Panc1 (cell line): ENCODE measurements at regions of chr17 and their contacts with region 1.

Region 1: GRCh38 chr17:63425482-63425881 is 20.6 kb downstream of the CYB561 start:
- DNase-seq: no peak
- ATAC-seq: peak; percentile 91
- H3K4me3 ChIP-seq: no peak overlapping the region
- H3K27ac ChIP-seq: no peak overlapping the region
- H3K4me1 ChIP-seq: peaks cover 28% of the 10 kb centered on the region
- H3K27me3 ChIP-seq: no peaks in the 10 kb centered on the region
- CTCF ChIP-seq: peak; percentile 96

Region 2: GRCh38 chr17:63399856-63400255 is 25.6 kb before region 1 on chr17:
- CTCF ChIA-PET with region 1: no interaction called
- POLR2A ChIA-PET with region 1: no interaction called
- in situ Hi-C with region 1: no loop called
- intact Hi-C with region 1: no loop called
- DNase-seq: no peak
- ATAC-seq: no peak
- H3K4me3 ChIP-seq: no peak overlapping the region
- H3K27ac ChIP-seq: no peak overlapping the region
- H3K4me1 ChIP-seq: no peaks in the 10 kb centered on the region
- H3K27me3 ChIP-seq: no peaks in the 10 kb centered on the region
- CTCF ChIP-seq: no peak

Region 3: DNA sequence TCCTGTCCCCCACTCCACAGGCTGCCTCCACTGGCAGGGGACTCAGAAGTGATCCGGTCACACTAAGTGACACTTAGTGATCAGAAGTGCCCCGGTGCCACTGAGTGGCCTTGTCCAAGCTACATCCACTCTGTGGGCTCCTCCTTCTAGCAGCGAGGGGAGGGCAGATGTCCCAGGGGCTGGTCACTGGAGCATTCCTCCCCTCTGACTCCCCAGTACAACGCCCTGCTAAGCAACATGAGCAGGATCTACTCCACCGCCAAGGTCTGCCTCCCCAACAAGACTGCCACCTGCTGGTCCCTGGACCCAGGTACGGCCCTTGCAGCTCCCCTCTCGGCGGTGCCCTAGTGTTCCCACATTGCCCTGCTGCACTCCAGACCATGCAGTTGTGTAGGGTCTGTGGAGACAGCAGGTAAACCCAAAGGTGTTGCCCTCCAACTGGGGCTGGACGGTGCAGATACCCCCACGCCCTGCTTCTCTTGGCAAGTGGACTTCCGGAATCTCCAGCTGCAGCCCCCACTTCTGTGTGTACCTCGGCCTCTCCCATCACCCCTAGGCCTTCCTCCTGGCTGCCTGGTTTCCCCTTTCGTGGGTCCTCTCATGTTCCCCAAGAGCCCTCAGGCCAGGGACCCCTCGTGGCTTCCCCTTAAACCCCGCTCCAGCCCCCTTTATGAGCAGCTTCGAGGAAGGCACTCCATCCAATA is 53.5 kb after region 1 on chr17:
- CTCF ChIA-PET with region 1: interaction called, 24 read pairs
- POLR2A ChIA-PET with region 1: no interaction called
- in situ Hi-C with region 1: no loop called
- intact Hi-C with region 1: loop called (anchors 5 kb)
- DNase-seq: peak; percentile 54
- ATAC-seq: peak; percentile 87
- H3K4me3 ChIP-seq: no peak overlapping the region
- H3K27ac ChIP-seq: no peak overlapping the region
- H3K4me1 ChIP-seq: peaks cover 16% of the 10 kb centered on the region
- H3K27me3 ChIP-seq: no peaks in the 10 kb centered on the region
- CTCF ChIP-seq: peak; percentile 95

Region 4: DNA sequence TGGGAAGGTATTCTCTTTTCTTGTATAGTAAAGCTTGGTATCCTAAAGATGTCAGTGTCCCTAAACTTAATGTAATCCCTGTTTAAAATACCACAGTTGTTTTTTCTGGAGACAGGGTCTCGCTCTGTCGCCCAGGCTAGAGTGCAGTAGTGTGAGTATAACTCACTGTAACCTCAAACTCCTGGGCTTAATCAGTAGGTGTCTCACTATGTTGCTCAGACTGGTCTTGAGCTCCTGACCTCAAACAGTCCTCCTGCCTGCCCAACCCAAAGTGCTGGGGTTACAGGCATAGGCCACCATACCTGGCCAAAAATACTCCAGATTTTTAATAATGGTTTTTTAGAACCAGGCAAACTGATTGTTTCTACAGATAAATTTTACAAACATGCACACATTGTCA is 133.0 kb after region 1 on chr17:
- CTCF ChIA-PET with region 1: no interaction called
- POLR2A ChIA-PET with region 1: no interaction called
- in situ Hi-C with region 1: no loop called
- intact Hi-C with region 1: no loop called
- DNase-seq: no peak
- ATAC-seq: no peak
- H3K4me3 ChIP-seq: no peak overlapping the region
- H3K27ac ChIP-seq: no peak overlapping the region
- H3K4me1 ChIP-seq: no peaks in the 10 kb centered on the region
- H3K27me3 ChIP-seq: no peaks in the 10 kb centered on the region
- CTCF ChIP-seq: no peak

Region 5: DNA sequence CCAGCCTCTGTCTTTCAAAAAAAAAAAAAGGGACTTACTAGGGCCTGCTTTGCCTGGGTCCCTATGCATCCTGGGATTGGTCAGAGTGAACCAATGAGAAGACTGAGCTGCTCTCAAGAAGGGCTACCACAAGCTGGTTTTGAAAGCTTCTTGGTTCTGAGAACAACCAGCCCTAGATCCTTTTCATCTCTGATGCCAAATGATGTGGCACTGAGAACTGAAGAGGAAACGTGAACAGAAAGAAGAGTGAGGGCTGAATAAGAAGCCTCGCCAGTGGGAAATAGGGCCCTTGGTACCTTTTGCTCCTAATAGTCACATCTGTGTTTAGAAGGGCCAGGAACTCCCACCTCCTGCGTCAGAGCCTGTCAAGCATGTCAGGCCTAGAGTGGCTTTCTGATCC is 185.9 kb after region 1 on chr17:
- CTCF ChIA-PET with region 1: interaction called, 16 read pairs
- POLR2A ChIA-PET with region 1: no interaction called
- in situ Hi-C with region 1: no loop called
- intact Hi-C with region 1: loop called (anchors 1 kb)
- DNase-seq: no peak
- ATAC-seq: no peak
- H3K4me3 ChIP-seq: no peak overlapping the region
- H3K27ac ChIP-seq: no peak overlapping the region
- H3K4me1 ChIP-seq: no peaks in the 10 kb centered on the region
- H3K27me3 ChIP-seq: no peaks in the 10 kb centered on the region
- CTCF ChIP-seq: no peak